K562 (cell line): ENCODE measurements at regions of chr15 and their contacts with region 1.

Region 1: DNA sequence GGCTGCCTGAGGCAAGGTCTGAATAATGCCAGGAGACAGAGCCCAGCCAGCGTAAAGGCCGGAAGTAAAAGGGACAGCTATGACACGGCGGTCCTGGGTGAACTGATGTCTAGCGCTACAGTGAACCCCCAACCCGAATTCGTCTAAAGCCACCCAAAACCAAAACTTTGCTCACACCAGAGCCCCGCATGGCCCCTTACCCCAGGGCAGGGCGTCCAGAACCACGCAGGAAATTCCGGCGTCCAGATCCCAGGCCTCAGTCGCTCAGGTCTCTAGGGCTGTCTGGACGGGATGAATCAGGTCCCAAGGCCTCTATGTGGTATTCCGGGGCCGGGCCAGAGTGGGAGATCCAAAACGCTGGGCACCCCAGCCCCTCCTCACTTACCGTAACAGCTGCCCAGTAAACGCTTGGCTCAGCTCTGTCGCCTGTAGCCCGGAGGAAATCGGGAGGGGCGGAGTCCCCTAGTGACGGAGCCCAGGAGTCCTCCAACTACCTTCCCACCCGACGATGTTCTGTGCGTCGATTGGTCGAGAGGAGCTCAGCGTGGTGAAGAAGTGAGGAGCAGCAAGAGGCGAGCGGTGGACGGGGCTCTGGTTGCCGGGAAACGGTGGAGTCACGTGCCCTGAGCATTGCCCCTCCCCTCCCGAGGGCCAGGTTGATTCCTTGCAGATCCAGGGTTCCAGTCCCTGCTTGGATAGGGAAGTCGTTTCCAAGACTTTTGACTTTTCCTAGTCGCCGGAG is at the start of gene CCDC32:
- DNase-seq: peak; percentile 95 to 99 (median 97)
- ATAC-seq: peak; percentile 95
- H3K4me3 ChIP-seq: peak within 1 kb of the TSS; percentile 70
- H3K27ac ChIP-seq: peak within 1 kb of the TSS; percentile 76
- H3K4me1 ChIP-seq: peaks cover 15 to 21% of the 10 kb centered on the region in 2 experiments; a peak in 4 of 5 replicates
- H3K27me3 ChIP-seq: no peaks in the 10 kb centered on the region
- CTCF ChIP-seq: no peak
- EP300 ChIP-seq: no peak
- POLR2A ChIP-seq: peak; percentile 89
- RAD21 ChIP-seq: no peak
- polyA plus RNA-seq, gene CCDC32: 54.4 to 94.8 TPM

Region 2: GRCh38 chr15:40513609-40514008 is 51.2 kb before region 1 on chr15:
- CTCF ChIA-PET with region 1: no interaction called
- POLR2A ChIA-PET with region 1: no interaction called
- in situ Hi-C with region 1: no loop called
- intact Hi-C with region 1: loop called (anchors 2 kb)
- DNase-seq: peak in 1 of 4 experiments; percentile 34
- ATAC-seq: no peak
- H3K4me3 ChIP-seq: no peak overlapping the region
- H3K27ac ChIP-seq: no peak overlapping the region
- H3K4me1 ChIP-seq: peaks cover 13 to 21% of the 10 kb centered on the region in 2 experiments
- H3K27me3 ChIP-seq: no peaks in the 10 kb centered on the region
- CTCF ChIP-seq: no peak
- EP300 ChIP-seq: no peak
- POLR2A ChIP-seq: no peak
- RAD21 ChIP-seq: no peak

Region 3: DNA sequence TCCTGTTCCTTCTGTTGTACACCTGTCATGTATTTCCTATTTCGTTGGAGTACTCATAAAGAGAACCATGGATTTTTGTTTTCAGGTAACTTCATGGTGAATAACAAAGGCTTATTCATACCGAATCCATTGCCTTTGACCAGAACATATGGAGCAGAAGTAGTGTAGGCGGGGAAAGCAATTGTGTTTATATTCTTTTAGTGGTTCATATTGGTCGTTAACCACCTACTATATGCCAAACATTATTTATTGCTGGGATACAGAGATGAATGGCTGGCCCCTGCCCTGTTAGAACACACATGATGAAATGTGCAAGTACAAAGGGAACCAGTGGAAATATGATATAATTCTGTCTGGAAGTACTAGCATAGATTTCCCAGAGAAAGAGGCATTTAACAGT is 14.1 kb after region 1 on chr15:
- CTCF ChIA-PET with region 1: no interaction called
- POLR2A ChIA-PET with region 1: interaction called, 10 read pairs
- in situ Hi-C with region 1: no loop called
- intact Hi-C with region 1: no loop called
- DNase-seq: no peak
- ATAC-seq: no peak
- H3K4me3 ChIP-seq: no peak overlapping the region
- H3K27ac ChIP-seq: no peak overlapping the region
- H3K4me1 ChIP-seq: no peaks in the 10 kb centered on the region; a peak in 1 of 5 replicates
- H3K27me3 ChIP-seq: no peaks in the 10 kb centered on the region
- CTCF ChIP-seq: no peak
- EP300 ChIP-seq: no peak
- POLR2A ChIP-seq: no peak
- RAD21 ChIP-seq: no peak

Region 4: DNA sequence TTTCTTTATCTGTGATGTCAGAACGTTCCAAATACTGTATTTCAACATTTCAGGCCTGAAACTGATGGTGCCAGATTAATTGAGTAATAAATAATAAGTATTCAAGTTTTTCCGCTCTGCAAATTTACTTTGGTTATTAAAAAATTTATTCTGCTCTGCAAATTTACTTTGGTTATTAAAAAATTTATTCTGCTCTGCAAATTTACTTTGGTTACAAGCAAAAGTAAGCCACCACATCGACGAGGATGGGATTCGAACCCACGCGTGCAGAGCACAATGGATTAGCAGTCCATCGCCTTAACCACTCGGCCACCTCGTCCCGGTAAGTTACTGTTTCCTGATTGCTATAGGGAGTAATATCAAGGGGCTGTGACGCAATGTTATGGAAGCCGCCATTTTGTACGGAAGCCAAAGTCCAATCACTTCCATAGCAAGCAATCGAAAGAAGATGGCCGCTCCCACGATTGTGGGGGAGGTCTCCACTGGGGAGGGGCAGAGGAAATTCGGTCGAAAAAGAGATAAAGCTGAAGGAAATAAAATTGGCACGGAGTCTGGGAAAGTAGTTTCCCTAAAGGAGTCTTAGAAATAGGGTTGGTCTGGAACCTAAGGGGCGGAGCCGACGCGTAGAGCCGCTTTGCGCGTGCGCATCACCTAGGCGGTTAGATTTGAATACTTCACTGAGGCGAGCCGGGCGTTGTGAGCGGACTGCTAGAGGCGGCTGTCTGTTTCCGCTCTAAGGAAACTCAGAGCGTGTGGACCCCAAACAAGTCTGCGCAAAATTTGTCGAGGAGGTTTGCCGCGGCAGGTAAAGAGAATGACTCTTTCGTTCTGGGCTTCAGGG is 29.0 kb after region 1 on chr15 and contains the start of gene KNL1:
- CTCF ChIA-PET with region 1: no interaction called
- POLR2A ChIA-PET with region 1: interaction called, 7 read pairs
- in situ Hi-C with region 1: no loop called
- intact Hi-C with region 1: loop called (anchors 1 kb)
- DNase-seq: peak; percentile 91 to 95 (median 94)
- ATAC-seq: peak; percentile 83
- H3K4me3 ChIP-seq: peak within 1 kb of the TSS; percentile 74
- H3K27ac ChIP-seq: peak within 1 kb of the TSS; percentile 88
- H3K4me1 ChIP-seq: peaks cover 13 to 16% of the 10 kb centered on the region in 2 experiments; a peak in 4 of 5 replicates
- H3K27me3 ChIP-seq: no peaks in the 10 kb centered on the region
- CTCF ChIP-seq: no peak
- EP300 ChIP-seq: peak; percentile 64; the same call in 1 of the 2 replicates
- POLR2A ChIP-seq: peak; percentile 90
- RAD21 ChIP-seq: no peak; a peak in 1 of 4 replicates
- polyA plus RNA-seq, gene KNL1: 14.5 to 17.9 TPM

Region 5: DNA sequence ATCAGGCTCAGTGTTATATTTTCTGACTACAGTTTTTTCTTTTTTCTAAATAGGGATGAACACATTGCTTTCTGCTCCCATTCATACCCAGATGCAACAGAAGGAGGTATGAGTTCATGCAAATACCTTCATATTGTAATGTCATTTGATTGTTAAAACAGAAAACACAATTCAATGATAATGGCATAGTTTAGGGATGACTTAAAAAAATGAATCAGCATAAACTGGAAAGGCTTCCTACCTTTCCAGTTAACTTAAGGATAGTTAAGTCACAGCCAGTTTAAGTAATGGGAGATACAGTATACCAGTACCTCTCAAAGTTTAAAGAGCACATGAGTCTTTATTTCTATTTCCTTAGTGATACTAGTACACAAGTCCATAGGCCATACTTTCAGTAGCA is 54.1 kb after region 1 on chr15:
- CTCF ChIA-PET with region 1: no interaction called
- POLR2A ChIA-PET with region 1: no interaction called
- in situ Hi-C with region 1: no loop called
- intact Hi-C with region 1: no loop called
- DNase-seq: no peak
- ATAC-seq: no peak
- H3K4me3 ChIP-seq: no peak overlapping the region
- H3K27ac ChIP-seq: no peak overlapping the region
- H3K4me1 ChIP-seq: peaks cover 0 to 4% of the 10 kb centered on the region in 2 experiments; a peak in 2 of 5 replicates
- H3K27me3 ChIP-seq: no peaks in the 10 kb centered on the region
- CTCF ChIP-seq: no peak
- EP300 ChIP-seq: no peak
- POLR2A ChIP-seq: no peak
- RAD21 ChIP-seq: no peak

Region 6: DNA sequence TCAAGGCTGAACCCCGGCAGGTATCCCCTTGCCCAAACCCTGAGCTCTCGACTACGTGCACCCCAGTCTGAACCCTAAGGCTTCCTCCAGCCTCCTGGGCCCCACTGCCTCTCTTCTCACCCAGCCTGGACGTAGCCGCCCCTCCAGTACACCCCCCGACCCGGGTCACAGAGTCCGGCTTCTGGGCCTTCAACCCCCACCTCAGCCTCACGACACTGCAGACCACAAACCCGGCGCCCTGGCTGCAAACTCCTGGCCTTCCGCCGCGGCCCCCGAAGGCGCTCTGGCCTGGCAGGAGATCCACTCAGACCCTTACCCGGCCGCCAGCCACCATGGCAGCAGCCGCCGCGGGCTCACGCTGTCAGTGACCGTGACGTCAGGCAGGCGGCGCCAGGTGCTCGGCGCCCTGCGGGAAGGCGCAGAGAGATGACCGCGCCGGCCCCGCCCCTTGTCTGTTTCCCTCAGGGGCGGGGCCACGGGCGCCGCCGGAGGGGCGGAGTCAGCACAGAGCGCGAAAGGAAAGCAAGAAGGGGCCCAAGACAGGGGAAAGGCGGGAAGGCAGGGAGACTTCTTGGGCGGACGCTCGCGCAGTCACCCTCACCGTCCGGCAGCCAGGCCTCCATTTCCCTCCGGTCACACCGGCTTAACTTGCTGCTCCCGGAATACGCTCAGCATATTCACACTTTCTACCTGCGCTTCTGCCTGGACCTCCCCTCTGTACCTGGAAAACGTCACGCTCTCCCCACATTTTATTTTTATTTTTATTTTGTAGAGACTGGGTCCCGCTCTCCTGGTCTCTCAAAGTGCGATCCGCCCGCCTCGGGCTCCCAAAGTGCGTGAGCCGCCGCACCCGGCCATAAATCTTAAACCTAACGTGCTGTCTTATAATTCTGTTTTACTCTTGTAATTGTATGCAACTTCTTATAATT is 190.4 kb after region 1 on chr15 and contains the start of gene RMDN3:
- CTCF ChIA-PET with region 1: no interaction called
- POLR2A ChIA-PET with region 1: interaction called, 3 read pairs
- in situ Hi-C with region 1: no loop called
- intact Hi-C with region 1: loop called (anchors 10 kb)
- DNase-seq: peak; percentile 92 to 97 (median 93)
- ATAC-seq: peak; percentile 87
- H3K4me3 ChIP-seq: peak within 1 kb of the TSS; percentile 99
- H3K27ac ChIP-seq: peak within 1 kb of the TSS; percentile 97
- H3K4me1 ChIP-seq: peaks cover 36 to 43% of the 10 kb centered on the region in 2 experiments
- H3K27me3 ChIP-seq: no peaks in the 10 kb centered on the region
- CTCF ChIP-seq: no peak
- EP300 ChIP-seq: peak; percentile 41; the same call in 1 of the 2 replicates
- POLR2A ChIP-seq: peak; percentile 96
- RAD21 ChIP-seq: no peak
- polyA plus RNA-seq, gene RMDN3: 8.1 to 8.9 TPM